ENCODE measurements at regions of chr5 and their contacts with region 1.

Region 1: DNA sequence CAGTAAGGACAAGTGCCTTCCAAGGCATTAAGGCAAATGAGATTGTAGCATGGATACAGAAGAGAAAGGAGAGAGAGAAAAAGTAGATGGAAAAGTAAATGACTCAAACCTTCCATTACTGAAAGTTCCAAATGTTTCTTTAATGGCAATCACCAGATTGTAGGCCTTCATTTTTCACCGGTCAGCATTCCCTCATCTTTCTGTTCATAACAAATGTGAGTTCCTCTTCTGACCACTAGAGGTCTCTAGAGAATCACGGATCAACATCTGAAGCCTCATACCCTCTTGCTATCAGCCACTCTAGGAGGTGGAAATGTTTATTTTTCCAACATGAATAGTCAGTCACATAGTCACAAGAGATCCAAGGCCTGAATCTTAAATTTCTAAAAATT is 73.6 kb upstream of the RPS23 start:
- ATAC-seq: peak; percentile 41 to 89 (median 78)
- H3K4me3 ChIP-seq: no peak overlapping the region
- H3K27ac ChIP-seq: no peak overlapping the region
- H3K4me1 ChIP-seq: peaks cover 8 to 10% of the 10 kb centered on the region in 2 donors

Region 2: DNA sequence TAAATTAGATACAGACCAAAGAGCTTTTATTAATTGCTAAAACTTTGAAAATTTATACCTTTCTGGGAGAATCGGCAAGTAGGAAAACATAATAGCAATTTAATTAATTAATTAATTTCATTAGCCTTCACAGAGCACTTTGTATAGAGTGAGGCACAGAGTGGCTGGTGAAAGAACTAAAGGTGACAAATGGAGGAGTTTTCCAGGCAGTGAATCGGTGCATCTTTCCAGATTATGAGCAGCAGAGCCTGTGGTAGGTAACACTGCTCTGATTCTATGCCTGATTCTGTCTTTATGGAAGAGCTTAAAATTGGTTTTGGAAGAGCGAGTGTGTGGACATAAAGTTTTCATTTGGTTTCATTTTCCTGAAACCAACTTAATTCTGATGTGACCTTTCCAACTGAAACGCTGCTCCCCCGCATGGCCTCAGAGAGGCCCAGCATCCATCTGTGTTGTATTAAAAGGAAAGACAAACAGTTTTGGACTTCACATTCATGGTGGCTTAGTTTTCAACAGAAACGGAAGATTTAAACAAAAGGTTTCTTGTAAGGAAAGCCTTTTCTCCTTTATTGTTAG is 115.3 kb after region 1 on chr5:
- in situ Hi-C with region 1: loop called in 1 of 9 experiments (anchors 25 kb)
- ATAC-seq: peak in 3 of 8 experiments; percentile 22 to 87 (median 82)
- H3K4me3 ChIP-seq: no peak overlapping the region
- H3K27ac ChIP-seq: no peak overlapping the region
- H3K4me1 ChIP-seq: peaks cover 0 to 6% of the 10 kb centered on the region in 2 donors

Region 3: DNA sequence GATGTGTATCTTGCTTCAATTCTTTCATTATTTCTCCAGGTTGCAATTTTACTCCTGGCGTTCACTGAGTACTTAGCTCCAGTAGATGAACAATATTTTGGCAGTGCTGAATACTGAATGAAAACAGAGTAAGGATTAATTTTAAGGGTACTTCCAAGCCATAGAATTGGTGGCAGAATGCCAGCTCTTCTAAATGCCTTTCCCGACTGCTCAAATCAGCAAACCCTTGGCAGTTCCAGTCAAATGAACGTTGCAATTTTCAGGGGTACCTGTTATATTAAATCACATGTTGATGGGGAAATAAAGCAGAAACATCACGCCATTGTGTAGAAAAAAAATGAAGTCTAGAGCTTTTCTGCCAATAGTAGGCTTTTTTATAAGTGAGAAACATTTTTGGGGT is 208.8 kb after region 1 on chr5:
- in situ Hi-C with region 1: no loop called
- ATAC-seq: no peak
- H3K4me3 ChIP-seq: no peak overlapping the region
- H3K27ac ChIP-seq: no peak overlapping the region
- H3K4me1 ChIP-seq: no peaks in the 10 kb centered on the region

Region 4: GRCh38 chr5:82641331-82642003 is 289.7 kb after region 1 on chr5:
- in situ Hi-C with region 1: loop called in 2 of 9 experiments (anchors 25 kb)
- ATAC-seq: peak; percentile 82 to 97 (median 94)
- H3K4me3 ChIP-seq: no peak overlapping the region
- H3K27ac ChIP-seq: no peak overlapping the region
- H3K4me1 ChIP-seq: peaks cover 3 to 12% of the 10 kb centered on the region in 2 donors

Region 5: GRCh38 chr5:82707741-82708140 is 356.0 kb after region 1 on chr5:
- in situ Hi-C with region 1: no loop called
- ATAC-seq: peak in 1 of 8 experiments; percentile 41
- H3K4me3 ChIP-seq: no peak overlapping the region
- H3K27ac ChIP-seq: no peak overlapping the region
- H3K4me1 ChIP-seq: no peaks in the 10 kb centered on the region

Region 6: DNA sequence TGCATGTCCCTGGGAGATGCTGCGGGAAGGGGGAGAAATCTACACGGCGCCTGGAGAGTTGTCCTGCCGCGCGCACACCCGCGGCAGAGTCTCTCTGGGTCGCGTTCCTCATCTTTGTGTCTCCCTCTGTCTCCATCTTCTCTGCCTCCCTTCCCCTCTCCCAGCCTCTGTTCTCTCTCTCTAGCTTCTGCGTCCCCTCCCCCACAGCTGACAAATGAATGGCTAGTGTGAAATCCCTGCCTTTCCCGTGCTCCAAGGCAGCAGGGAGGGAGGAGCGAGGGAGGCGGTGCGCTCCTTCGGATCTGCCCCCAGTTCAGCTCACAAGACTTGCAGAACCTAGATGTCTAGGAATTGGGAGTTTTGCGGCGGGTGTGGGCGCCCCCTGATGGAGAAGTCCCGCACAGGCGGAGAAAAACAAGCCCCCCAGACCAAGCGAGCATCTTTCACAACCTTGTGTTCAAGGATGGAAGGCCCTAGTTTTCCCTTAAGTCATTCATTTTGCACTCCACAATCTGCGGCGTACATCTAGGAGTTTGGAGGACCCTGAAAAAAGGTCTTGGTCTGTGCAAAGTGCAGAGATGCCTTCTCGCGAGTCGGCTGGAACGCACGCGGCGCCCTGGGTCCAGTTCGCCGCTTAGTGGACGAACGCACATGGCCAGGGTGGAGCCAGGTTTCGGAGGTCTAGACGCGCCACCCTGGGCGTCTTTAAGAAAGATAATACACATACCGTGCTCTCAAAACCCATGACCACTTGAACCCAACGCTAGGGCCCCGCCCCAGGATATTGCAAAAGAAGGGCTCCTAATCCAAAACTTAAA is 1121.8 kb after region 1 on chr5:
- in situ Hi-C with region 1: loop called in 1 of 9 experiments (anchors 25 kb)
- ATAC-seq: peak; percentile 64 to 84 (median 78)
- H3K4me3 ChIP-seq: peak overlapping the region; percentile 44 to 57 (median 49)
- H3K27ac ChIP-seq: peak overlapping the region; percentile 46 to 73
- H3K4me1 ChIP-seq: peaks cover 8 to 19% of the 10 kb centered on the region in 2 donors

Region 7: GRCh38 chr5:83564069-83564749 is 1212.5 kb after region 1 on chr5:
- in situ Hi-C with region 1: loop called in 7 of 9 experiments (anchors 10 to 25 kb)
- ATAC-seq: peak in 5 of 8 experiments; percentile 40 to 77 (median 62)
- H3K4me3 ChIP-seq: no peak overlapping the region
- H3K27ac ChIP-seq: no peak overlapping the region
- H3K4me1 ChIP-seq: peaks cover 0 to 11% of the 10 kb centered on the region in 2 donors